Activated CD8-positive, alpha-beta T cell treated with anti-CD3 and anti-CD28 coated beads for 36 hours (primary cell): ENCODE measurements at regions of chr12 and their contacts with region 1.

Region 1: GRCh38 chr12:53701518-53702260 is 25.6 kb downstream of the CALCOCO1 start:
- DNase-seq: peak; percentile 86
- ATAC-seq: peak; percentile 96
- H3K4me3 Mint-ChIP-seq: no peak overlapping the region
- H3K27ac Mint-ChIP-seq: no peak overlapping the region
- H3K4me1 Mint-ChIP-seq: peaks cover 3% of the 10 kb centered on the region
- H3K27me3 Mint-ChIP-seq: peaks cover 71% of the 10 kb centered on the region
- CTCF ChIP-seq: peak; percentile 93

Region 2: GRCh38 chr12:53717319-53717718 is 15.6 kb after region 1 on chr12:
- CTCF ChIA-PET with region 1: interaction called, 15 read pairs
- POLR2A ChIA-PET with region 1: interaction called, 5 read pairs
- intact Hi-C with region 1: no loop called
- DNase-seq: no peak
- ATAC-seq: no peak
- H3K4me3 Mint-ChIP-seq: no peak overlapping the region
- H3K27ac Mint-ChIP-seq: no peak overlapping the region
- H3K4me1 Mint-ChIP-seq: no peaks in the 10 kb centered on the region
- H3K27me3 Mint-ChIP-seq: no peaks in the 10 kb centered on the region
- CTCF ChIP-seq: no peak

Region 3: GRCh38 chr12:53727310-53728041 is 25.8 kb after region 1 on chr12 and contains the start of gene CALCOCO1:
- CTCF ChIA-PET with region 1: interaction called, 29 read pairs
- POLR2A ChIA-PET with region 1: interaction called, 4 read pairs
- intact Hi-C with region 1: no loop called
- DNase-seq: peak; percentile 99
- ATAC-seq: peak; percentile 97
- H3K4me3 Mint-ChIP-seq: peak within 1 kb of the TSS; percentile 87
- H3K27ac Mint-ChIP-seq: peak within 1 kb of the TSS; percentile 95
- H3K4me1 Mint-ChIP-seq: peaks cover 28% of the 10 kb centered on the region
- H3K27me3 Mint-ChIP-seq: no peaks in the 10 kb centered on the region
- CTCF ChIP-seq: no peak
- total RNA-seq, gene CALCOCO1: 15.5 to 16.2 TPM

Region 4: DNA sequence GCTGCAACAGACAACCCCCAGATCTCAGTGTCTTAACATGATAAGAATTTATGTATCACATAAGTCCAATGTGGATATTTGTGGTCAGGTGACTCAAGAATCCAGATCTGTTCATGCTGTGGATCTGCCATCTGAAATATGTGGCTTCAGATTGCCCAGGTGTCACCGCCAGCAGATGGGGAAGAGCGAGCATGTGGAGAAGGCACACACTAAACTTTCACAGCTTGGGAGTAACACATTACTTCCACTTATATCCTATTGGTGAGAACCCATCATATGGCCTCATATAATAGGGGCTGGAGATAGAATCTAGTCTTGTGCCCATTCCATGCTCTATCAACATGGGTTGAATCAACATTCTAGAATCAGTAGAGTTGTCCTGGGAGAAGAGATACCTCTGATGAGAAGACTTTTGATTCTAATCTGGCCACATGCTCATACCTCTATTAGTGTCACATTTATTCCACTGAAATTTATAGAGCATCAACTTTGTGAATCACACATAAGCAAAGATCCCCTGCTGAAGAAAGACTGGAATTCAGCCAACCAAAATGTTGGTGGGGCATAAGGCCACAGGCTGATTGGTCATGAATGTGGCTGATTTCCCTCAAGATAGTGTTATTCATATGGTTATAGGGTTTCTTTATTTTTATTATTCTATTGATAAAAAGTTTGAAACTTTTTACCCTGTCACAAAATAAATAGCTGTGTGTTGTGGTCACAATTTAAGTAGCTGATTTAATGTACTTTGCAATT is 31.5 kb after region 1 on chr12:
- CTCF ChIA-PET with region 1: interaction called, 361 read pairs
- POLR2A ChIA-PET with region 1: interaction called, 4 read pairs
- intact Hi-C with region 1: no loop called
- DNase-seq: no peak
- ATAC-seq: no peak
- H3K4me3 Mint-ChIP-seq: no peak overlapping the region
- H3K27ac Mint-ChIP-seq: no peak overlapping the region
- H3K4me1 Mint-ChIP-seq: peaks cover 10% of the 10 kb centered on the region
- H3K27me3 Mint-ChIP-seq: peaks cover 19% of the 10 kb centered on the region
- CTCF ChIP-seq: no peak

Region 5: DNA sequence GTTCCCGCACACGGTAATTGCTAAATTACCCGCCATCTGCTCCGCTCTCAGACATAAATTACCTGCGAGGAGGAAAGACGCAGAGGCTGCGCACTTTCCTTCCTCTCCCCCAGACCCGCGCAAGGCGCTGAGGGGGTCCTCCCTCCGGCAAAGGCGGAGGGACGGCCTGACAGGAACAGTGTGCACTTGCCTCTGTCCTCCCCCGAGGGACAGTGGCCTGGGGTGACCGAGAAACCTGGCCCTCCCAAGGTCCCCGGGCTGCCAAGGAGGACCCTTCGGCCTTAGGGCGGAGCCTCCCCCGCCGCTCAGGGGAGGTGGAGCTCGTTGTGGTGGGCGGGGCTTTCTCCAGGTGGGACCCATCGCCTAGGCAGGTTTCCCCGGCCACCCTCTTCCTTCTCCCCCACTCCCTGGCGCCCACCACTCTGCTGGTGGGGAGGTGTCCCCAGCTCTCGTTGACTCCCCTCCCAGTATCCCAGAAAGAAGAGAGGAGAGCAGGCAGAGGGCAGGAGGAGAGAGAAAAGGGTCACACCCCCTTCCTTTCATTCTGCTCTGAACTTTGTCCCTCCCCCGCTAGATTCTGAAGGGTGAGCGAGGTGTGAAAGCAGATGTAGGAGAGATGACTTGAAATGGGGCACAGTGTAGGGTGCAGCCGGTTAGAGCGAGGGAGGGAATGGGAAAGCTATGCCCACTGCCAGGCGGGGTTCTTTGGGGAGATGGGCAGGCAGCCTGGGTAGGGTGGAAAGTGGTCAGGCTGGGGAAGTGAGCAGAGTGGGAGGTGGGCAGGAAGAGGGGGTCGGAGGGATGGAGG is 36.9 kb after region 1 on chr12:
- CTCF ChIA-PET with region 1: interaction called, 361 read pairs
- POLR2A ChIA-PET with region 1: interaction called, 4 read pairs
- intact Hi-C with region 1: no loop called
- DNase-seq: peak; percentile 57
- ATAC-seq: peak; percentile 80
- H3K4me3 Mint-ChIP-seq: peak overlapping the region; percentile 45
- H3K27ac Mint-ChIP-seq: no peak overlapping the region
- H3K4me1 Mint-ChIP-seq: peaks cover 19% of the 10 kb centered on the region
- H3K27me3 Mint-ChIP-seq: peaks cover 39% of the 10 kb centered on the region
- CTCF ChIP-seq: no peak

Region 6: GRCh38 chr12:54147186-54147585 is 445.5 kb after region 1 on chr12:
- CTCF ChIA-PET with region 1: no interaction called
- POLR2A ChIA-PET with region 1: no interaction called
- intact Hi-C with region 1: no loop called
- DNase-seq: no peak
- ATAC-seq: no peak
- H3K4me3 Mint-ChIP-seq: no peak overlapping the region
- H3K27ac Mint-ChIP-seq: no peak overlapping the region
- H3K4me1 Mint-ChIP-seq: no peaks in the 10 kb centered on the region
- H3K27me3 Mint-ChIP-seq: no peaks in the 10 kb centered on the region
- CTCF ChIP-seq: no peak